ENCODE measurements at regions of chr19 and their contacts with region 1.

Region 1: DNA sequence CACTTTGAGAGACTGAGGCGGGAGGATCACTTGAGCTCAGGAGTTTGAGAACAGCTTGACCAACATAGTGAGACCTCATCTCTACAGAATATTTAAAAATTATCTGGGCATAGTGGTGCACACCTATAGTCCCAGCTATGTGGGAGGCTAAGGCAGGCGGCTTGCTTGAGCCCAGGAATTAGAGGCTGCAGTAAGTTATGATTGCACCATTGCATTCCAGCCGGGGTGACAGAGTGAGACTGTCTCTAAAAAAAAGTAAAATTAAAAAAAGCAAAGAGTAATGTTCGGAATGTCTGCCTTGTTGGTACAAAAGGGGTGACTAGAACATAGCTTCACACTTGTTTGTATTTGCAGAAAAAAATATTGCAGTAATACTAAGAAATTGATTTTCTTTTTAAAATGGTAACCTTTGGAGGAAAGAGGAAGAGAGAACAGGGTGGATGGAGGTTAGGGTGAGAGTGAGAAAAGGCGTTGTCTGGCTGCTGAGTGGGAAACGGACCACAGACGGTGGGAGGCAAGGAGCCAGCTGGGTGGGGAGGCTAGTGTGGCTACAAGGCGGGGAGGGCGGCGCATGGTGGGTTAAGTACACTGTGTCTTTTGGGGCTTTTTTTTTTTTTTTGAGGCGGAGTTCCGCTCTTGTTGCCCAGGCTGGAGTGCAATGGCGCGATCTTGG is 10.2 kb downstream of the PPP1R14A start:
- DNase-seq: no peak
- ATAC-seq: no peak
- H3K4me3 ChIP-seq: no peak overlapping the region
- H3K4me3 Mint-ChIP-seq: no peak overlapping the region
- H3K27ac ChIP-seq: no peak overlapping the region
- H3K27ac Mint-ChIP-seq: no peak overlapping the region
- H3K4me1 ChIP-seq: peaks cover 3 to 12% of the 10 kb centered on the region in 2 donors
- H3K4me1 Mint-ChIP-seq: peaks cover 15% of the 10 kb centered on the region
- H3K27me3 ChIP-seq: no peaks in the 10 kb centered on the region
- H3K27me3 Mint-ChIP-seq: no peaks in the 10 kb centered on the region
- CTCF ChIP-seq: no peak

Region 2: DNA sequence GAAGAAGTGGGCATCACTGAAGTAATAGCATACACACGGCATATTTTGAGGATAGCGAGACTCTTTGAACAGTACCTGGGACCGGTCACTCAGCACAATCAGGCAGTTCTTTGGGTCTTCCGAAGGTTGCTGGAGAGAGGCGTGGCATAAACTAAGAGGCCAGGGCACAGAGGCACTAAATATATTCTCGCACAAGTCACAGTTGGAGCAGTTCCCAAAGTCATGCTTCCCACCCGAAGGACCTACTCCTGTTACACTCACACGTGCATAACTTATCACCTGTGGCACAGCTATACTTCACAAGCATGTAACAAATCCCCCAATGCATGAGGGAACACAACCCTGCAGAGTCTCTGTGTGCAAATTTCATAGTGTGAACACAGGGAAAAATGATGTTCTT is 349.8 kb before region 1 on chr19:
- CTCF ChIA-PET with region 1: interaction called, 36 read pairs
- POLR2A ChIA-PET with region 1: no interaction called
- intact Hi-C with region 1: loop called (anchors 5 kb)
- DNase-seq: no peak
- ATAC-seq: no peak
- H3K4me3 ChIP-seq: no peak overlapping the region
- H3K4me3 Mint-ChIP-seq: no peak overlapping the region
- H3K27ac ChIP-seq: no peak overlapping the region
- H3K27ac Mint-ChIP-seq: no peak overlapping the region
- H3K4me1 ChIP-seq: peaks cover 6 to 10% of the 10 kb centered on the region in 2 donors
- H3K4me1 Mint-ChIP-seq: peaks cover 10% of the 10 kb centered on the region
- H3K27me3 ChIP-seq: peaks cover 0 to 7% (median 3%) of the 10 kb centered on the region in 4 experiments
- H3K27me3 Mint-ChIP-seq: peaks cover 16% of the 10 kb centered on the region
- CTCF ChIP-seq: no peak

Region 3: DNA sequence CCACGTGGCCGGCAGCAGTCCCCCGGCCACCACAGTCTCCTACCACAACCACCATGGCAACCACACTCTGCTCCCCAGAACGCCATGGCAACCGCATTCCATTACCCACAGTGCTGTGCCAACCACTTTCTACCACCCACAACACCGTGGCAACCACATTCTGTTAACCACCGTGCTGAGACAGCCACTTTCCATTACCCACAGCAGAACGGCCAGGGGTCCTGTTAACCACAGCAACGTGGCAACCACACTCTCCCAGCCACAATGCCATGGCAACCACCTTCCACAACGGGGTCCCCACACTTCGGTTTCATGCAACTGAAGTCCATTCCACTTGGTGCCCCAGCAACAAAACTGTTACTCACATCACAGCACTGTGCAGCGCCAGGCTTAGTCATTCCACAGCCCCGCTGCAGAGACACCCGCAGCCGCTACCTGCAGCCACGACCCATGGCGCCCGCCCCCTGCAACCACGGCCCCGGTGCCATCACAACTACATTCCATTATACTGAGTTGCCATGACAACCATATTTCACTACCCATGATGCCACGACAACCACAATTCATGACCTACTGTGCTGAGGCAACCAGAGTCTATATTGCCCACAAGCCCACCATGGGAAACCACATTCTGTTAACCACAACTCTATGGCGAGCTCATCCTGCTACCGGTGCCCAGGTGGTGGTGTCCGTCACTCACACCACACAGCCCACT is 31.9 kb before region 1 on chr19:
- CTCF ChIA-PET with region 1: no interaction called
- POLR2A ChIA-PET with region 1: no interaction called
- intact Hi-C with region 1: no loop called
- DNase-seq: peak; percentile 63
- ATAC-seq: peak; percentile 45
- H3K4me3 ChIP-seq: no peak overlapping the region
- H3K4me3 Mint-ChIP-seq: peak overlapping the region; percentile 38
- H3K27ac ChIP-seq: no peak overlapping the region
- H3K27ac Mint-ChIP-seq: peak overlapping the region; percentile 50
- H3K4me1 ChIP-seq: peaks cover 26 to 29% of the 10 kb centered on the region in 2 donors
- H3K4me1 Mint-ChIP-seq: peaks cover 31% of the 10 kb centered on the region
- H3K27me3 ChIP-seq: peaks cover 0 to 58% (median 16%) of the 10 kb centered on the region in 4 experiments
- H3K27me3 Mint-ChIP-seq: peaks cover 32% of the 10 kb centered on the region
- CTCF ChIP-seq: no peak

Region 4: DNA sequence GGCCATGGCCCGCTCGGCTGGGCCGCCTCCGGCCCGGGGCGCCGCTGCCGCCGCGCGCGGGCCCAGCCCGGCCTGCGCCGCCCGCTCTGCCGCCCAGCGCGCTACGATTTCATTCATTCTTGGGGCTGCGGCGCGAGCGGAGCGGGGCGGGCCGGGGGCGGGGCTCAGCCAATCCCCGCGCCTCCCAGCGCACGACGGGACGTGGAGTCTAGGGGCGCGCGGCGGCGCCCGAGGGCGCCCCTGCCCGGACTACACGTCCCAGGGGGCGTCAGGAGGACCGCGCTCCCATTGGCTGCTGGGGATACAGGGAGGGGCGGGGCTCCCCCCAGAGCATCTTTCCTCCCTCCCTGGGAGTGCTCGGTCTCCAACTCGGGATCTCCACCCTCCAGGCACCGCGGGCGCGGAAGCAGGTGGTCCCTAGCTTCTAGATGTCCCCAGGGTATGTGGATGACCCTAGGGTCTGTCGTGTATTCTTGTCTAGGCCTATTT is 16.3 kb before region 1 on chr19:
- CTCF ChIA-PET with region 1: interaction called, 14 read pairs
- POLR2A ChIA-PET with region 1: interaction called, 5 read pairs
- intact Hi-C with region 1: loop called (anchors 1 kb)
- DNase-seq: peak; percentile 79
- ATAC-seq: peak; percentile 90
- H3K4me3 ChIP-seq: no peak overlapping the region
- H3K4me3 Mint-ChIP-seq: peak overlapping the region; percentile 64
- H3K27ac ChIP-seq: no peak overlapping the region
- H3K27ac Mint-ChIP-seq: peak overlapping the region; percentile 56
- H3K4me1 ChIP-seq: peaks cover 23% of the 10 kb centered on the region in 2 donors
- H3K4me1 Mint-ChIP-seq: peaks cover 22% of the 10 kb centered on the region
- H3K27me3 ChIP-seq: peaks cover 0 to 83% (median 33%) of the 10 kb centered on the region in 4 experiments
- H3K27me3 Mint-ChIP-seq: peaks cover 37% of the 10 kb centered on the region
- CTCF ChIP-seq: no peak

Region 5: GRCh38 chr19:38263689-38264485 is 17.9 kb after region 1 on chr19:
- CTCF ChIA-PET with region 1: interaction called, 23 read pairs
- POLR2A ChIA-PET with region 1: interaction called, 9 read pairs
- intact Hi-C with region 1: loop called (anchors 1 kb)
- DNase-seq: peak; percentile 95
- ATAC-seq: peak; percentile 91
- H3K4me3 ChIP-seq: peak overlapping the region in 4 of 5 experiments; percentile 67 to 87 (median 71)
- H3K4me3 Mint-ChIP-seq: peak overlapping the region; percentile 98
- H3K27ac ChIP-seq: peak overlapping the region; percentile 83 to 98
- H3K27ac Mint-ChIP-seq: peak overlapping the region; percentile 99
- H3K4me1 ChIP-seq: peaks cover 20 to 26% of the 10 kb centered on the region in 2 donors
- H3K4me1 Mint-ChIP-seq: peaks cover 39% of the 10 kb centered on the region
- H3K27me3 ChIP-seq: no peaks in the 10 kb centered on the region
- H3K27me3 Mint-ChIP-seq: no peaks in the 10 kb centered on the region
- CTCF ChIP-seq: no peak

Region 6: GRCh38 chr19:38315657-38316476 is 69.9 kb after region 1 on chr19 and contains the start of gene YIF1B:
- CTCF ChIA-PET with region 1: interaction called, 12 read pairs
- POLR2A ChIA-PET with region 1: no interaction called
- intact Hi-C with region 1: loop called (anchors 5 kb)
- DNase-seq: peak; percentile 96
- ATAC-seq: peak; percentile 91
- H3K4me3 ChIP-seq: peak within 1 kb of the TSS; percentile 62 to 90 (median 70)
- H3K4me3 Mint-ChIP-seq: peak within 1 kb of the TSS; percentile 96
- H3K27ac ChIP-seq: peak within 1 kb of the TSS; percentile 85 to 91
- H3K27ac Mint-ChIP-seq: peak within 1 kb of the TSS; percentile 96
- H3K4me1 ChIP-seq: peaks cover 29 to 47% of the 10 kb centered on the region in 2 donors
- H3K4me1 Mint-ChIP-seq: peaks cover 47% of the 10 kb centered on the region
- H3K27me3 ChIP-seq: peaks cover 0 to 2% (median 0%) of the 10 kb centered on the region in 4 experiments
- H3K27me3 Mint-ChIP-seq: no peaks in the 10 kb centered on the region
- CTCF ChIP-seq: no peak
- total RNA-seq, gene YIF1B: 30.6 and 31.6 TPM in 2 replicates

Region 7: DNA sequence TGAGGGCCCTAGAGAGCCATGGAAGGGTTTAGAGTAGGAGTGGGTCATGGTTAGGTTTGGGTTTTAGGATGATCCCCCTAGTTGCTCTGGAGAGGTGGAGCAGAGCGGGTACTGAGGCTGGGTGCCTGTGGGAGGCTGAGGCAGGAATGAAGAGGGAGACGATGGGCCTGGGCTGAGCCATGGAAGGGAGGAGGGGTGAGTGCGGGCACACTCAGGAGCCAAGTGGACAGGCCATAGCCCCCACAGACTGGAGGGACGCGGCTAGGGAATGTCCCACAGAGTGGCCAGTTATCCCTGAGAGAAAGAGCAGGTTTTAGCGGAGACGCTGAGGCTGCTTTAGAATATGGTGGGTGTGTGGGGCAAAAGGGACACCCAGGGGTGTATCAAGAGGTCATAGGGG is 83.7 kb after region 1 on chr19:
- CTCF ChIA-PET with region 1: interaction called, 55 read pairs
- POLR2A ChIA-PET with region 1: no interaction called
- intact Hi-C with region 1: no loop called
- DNase-seq: no peak
- ATAC-seq: no peak
- H3K4me3 ChIP-seq: no peak overlapping the region
- H3K4me3 Mint-ChIP-seq: no peak overlapping the region
- H3K27ac ChIP-seq: no peak overlapping the region
- H3K27ac Mint-ChIP-seq: no peak overlapping the region
- H3K4me1 ChIP-seq: no peaks in the 10 kb centered on the region
- H3K4me1 Mint-ChIP-seq: no peaks in the 10 kb centered on the region
- H3K27me3 ChIP-seq: no peaks in the 10 kb centered on the region
- H3K27me3 Mint-ChIP-seq: no peaks in the 10 kb centered on the region
- CTCF ChIP-seq: no peak